ENCODE measurements at regions of chr10 and their contacts with region 1.

Region 1: GRCh38 chr10:71708301-71708703 is 11.3 kb downstream of the C10orf105 start:
- DNase-seq: peak; percentile 54
- H3K4me3 ChIP-seq: no peak overlapping the region
- H3K27ac ChIP-seq: no peak overlapping the region
- H3K4me1 ChIP-seq: no peaks in the 10 kb centered on the region
- H3K27me3 ChIP-seq: peaks cover 0 to 3% of the 10 kb centered on the region in 2 experiments
- CTCF ChIP-seq: peak; percentile 84 to 94
- POLR2A ChIP-seq: no peak

Region 2: DNA sequence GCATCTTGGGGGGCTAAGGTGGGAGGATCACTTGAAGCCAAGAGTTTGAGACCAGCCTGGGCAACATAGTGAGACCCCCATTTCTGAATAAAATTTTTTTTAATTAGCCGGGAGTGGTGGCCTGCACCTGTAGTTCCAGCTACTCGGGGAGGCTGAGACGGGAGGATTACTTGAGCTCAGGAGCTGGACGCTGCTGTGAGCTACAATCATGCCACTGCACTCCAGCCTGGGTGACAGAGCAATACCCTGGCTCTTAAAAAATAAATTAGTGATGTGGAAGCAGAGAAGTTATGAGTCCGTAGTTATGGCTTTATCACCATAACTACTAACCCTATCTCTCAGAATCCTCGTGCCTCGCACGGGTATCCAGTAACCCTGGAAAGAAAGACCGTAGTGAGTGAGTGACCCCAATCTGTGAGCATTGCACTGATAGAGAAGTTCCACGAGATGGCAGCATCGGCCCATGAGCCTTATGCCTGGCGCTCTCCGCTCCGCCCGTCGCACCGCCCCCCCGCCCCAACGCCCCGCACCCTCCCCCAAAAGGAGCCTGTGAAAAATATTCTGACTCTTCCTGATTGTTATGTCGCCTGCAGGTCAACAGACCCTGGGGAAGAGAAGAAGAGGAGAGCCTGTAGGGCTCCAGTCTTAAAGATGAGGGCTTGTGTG is 394.1 kb before region 1 on chr10:
- CTCF ChIA-PET with region 1: interaction called, 57 read pairs
- POLR2A ChIA-PET with region 1: no interaction called
- dilution Hi-C with region 1: no loop called
- intact Hi-C with region 1: loop called (anchors 1 kb)
- DNase-seq: peak; percentile 28
- H3K4me3 ChIP-seq: no peak overlapping the region
- H3K27ac ChIP-seq: no peak overlapping the region
- H3K4me1 ChIP-seq: no peaks in the 10 kb centered on the region
- H3K27me3 ChIP-seq: peaks cover 16 to 20% of the 10 kb centered on the region in 2 experiments
- CTCF ChIP-seq: peak; percentile 40 to 81
- POLR2A ChIP-seq: no peak

Region 3: DNA sequence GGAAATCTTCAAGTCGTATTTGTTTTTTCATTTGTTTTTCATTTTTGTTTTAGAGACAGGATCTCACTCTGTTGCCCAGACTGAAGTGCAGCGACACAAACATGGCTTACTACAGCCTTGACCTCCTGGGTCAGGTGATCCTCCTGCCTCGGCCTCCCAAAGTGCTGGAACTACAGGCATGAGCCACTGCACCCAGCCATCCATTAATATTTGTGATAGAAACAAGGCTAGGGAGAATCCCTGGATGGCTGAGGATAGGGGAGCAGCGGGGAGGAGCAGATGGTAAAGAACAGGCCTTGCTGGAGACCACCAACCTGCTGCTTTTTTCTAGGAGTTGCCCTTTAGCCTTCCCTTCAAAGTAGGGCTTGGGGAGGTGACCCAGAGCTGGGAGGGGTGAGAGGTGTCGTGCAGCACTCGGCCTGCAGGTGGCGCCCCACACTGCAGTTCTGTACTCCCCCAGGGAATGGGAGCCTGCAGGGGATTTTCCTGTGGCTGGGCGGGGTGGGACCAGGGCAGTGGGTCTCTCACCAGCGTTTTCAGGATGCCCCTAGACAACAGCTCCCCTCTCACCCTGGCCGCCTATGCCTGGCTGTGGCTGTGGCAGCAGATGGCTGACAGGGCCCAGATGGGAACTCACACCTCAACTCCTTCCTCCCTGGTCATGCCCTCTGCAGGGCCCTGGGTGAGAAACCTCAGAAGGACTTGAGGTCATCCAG is 324.2 kb before region 1 on chr10:
- CTCF ChIA-PET with region 1: interaction called, 42 read pairs
- POLR2A ChIA-PET with region 1: no interaction called
- dilution Hi-C with region 1: no loop called
- intact Hi-C with region 1: loop called (anchors 1 kb)
- DNase-seq: peak; percentile 42
- H3K4me3 ChIP-seq: no peak overlapping the region
- H3K27ac ChIP-seq: no peak overlapping the region
- H3K4me1 ChIP-seq: no peaks in the 10 kb centered on the region
- H3K27me3 ChIP-seq: peaks cover 6 to 8% of the 10 kb centered on the region in 2 experiments
- CTCF ChIP-seq: peak; percentile 91 to 98
- POLR2A ChIP-seq: no peak

Region 4: GRCh38 chr10:71569775-71570588 is 138.3 kb before region 1 on chr10:
- CTCF ChIA-PET with region 1: interaction called, 13 read pairs
- POLR2A ChIA-PET with region 1: no interaction called
- dilution Hi-C with region 1: no loop called
- intact Hi-C with region 1: no loop called
- DNase-seq: peak; percentile 43
- H3K4me3 ChIP-seq: no peak overlapping the region
- H3K27ac ChIP-seq: no peak overlapping the region
- H3K4me1 ChIP-seq: no peaks in the 10 kb centered on the region
- H3K27me3 ChIP-seq: peaks cover 2 to 4% of the 10 kb centered on the region in 2 experiments
- CTCF ChIP-seq: peak; percentile 71 to 81
- POLR2A ChIP-seq: no peak

Region 5: DNA sequence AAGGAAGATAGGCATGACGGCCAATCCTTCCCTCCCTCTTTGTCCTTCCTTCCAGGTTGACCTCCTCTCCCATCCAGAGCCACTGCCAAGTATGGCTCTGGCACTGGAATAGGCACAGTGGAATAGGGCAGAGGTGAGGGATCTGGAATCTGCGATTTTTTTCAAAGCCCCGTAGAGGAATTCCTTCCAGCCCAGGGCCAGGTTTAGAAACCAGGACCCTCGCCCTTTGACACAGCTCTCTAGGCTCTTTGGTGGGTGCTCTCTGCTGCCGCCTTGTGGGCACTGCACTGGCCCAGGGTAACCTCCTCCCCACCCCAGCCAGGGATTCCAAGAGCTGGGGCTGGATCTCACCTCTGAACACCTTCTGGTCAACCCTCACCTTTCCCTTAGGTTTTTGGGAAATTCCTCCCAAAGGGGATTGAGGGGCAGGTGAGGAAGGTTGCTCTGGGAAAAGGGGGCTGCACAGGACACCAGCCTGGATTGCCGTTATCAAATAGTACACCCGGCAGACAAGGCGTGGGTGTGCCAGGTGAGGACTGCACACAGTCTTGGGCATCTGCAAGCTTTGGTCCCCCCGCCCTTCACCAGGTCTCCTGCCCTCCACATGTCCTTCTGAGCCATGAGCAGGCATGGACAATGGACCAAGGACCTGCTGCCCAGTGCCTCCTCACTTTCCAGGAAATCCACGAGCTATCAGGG is 11.5 kb before region 1 on chr10:
- CTCF ChIA-PET with region 1: interaction called, 63 read pairs
- POLR2A ChIA-PET with region 1: interaction called, 3 read pairs
- dilution Hi-C with region 1: no loop called
- intact Hi-C with region 1: no loop called
- DNase-seq: peak; percentile 23
- H3K4me3 ChIP-seq: no peak overlapping the region
- H3K27ac ChIP-seq: no peak overlapping the region
- H3K4me1 ChIP-seq: peaks cover 24% of the 10 kb centered on the region
- H3K27me3 ChIP-seq: peaks cover 4 to 12% of the 10 kb centered on the region in 2 experiments
- CTCF ChIP-seq: peak; percentile 81 to 93
- POLR2A ChIP-seq: no peak

Region 6: DNA sequence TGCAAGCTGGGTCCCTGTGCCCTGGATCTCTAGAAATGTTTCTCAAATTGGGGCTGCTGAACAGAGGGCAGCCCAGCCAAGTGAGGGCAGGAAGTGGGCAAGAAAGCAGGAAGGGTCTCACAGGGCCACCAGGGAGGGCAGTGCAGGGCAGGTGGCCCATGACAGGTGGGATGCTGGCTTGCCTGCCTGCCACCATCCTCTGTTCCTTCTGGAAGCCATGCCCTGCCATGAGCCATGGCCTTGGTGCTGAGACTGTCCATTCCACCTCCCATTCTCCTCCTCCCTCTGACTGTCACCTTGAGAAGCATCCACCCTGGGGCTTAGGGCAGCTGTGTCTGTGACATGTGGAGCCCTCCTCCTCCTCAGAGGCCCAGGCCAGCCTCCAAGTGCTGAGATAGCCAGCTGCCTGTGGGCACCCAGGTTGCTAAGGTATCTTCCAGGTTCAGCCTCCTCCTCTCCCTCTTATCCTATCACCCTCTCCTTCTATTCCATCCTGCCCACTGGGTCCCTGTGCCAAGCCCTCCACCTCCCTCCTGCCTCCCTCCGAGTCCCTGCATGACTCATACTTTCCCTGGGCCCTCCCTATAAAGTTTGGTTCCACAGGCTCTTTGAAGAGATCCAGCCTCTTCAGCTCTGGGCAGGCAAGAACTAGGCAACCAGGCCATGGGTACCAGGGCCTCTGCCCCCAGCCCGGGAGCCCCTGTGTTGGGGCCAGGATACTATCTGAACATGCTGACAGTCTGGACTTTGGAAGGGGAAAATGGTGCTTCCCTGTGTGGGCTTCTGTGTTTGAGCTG is 63.7 kb after region 1 on chr10:
- CTCF ChIA-PET with region 1: interaction called, 19 read pairs
- POLR2A ChIA-PET with region 1: no interaction called
- dilution Hi-C with region 1: no loop called
- intact Hi-C with region 1: no loop called
- DNase-seq: peak; percentile 32
- H3K4me3 ChIP-seq: no peak overlapping the region
- H3K27ac ChIP-seq: no peak overlapping the region
- H3K4me1 ChIP-seq: peaks cover 36% of the 10 kb centered on the region
- H3K27me3 ChIP-seq: no peaks in the 10 kb centered on the region
- CTCF ChIP-seq: no peak
- POLR2A ChIP-seq: no peak

Measured in endothelial cell of umbilical vein (primary cell).